Activated T-helper 2 cell treated with anti-CD3 and anti-CD28 coated beads, Interferon-gamma antibody, Interleukin-2, Interleukin-4, amounts not matched to agents 10 μg/mL and 5 μg/mL and 100 μg/mL, durations not matched to agents 14 hours and 24 hours and 36 hours (primary cell): ENCODE measurements at regions of chr9 and their contacts with region 1.

Region 1: DNA sequence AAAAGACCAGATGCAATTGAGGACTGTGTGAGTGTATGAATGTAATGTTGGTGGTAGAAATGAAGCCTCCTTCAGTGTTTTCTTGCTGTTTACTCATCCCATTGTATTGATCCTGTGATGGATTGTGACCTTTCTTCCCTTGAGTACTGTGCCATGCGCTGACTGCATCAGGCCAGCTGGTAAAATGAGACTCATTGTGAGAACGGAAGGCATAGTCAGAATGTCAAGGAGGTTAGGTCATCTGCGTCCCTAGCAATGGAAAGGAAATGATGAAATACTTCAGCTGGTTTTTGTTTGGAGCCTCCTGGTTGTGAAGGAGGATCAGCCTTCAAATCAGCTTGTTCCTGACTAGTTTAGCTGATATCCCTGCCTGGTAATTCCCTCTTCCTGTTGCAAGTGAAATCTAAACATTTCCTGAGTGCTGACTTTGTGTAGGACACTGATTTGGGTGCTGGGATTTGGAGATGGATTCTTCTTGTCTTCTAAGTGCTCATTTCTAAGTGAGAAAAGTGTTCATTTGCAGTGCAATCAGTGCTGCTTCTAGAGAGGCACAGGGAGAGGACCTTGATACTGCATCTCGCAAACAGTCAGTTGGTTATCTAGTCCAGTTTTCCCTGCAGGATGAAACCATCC is 35.5 kb downstream of the TNFSF8 start:
- DNase-seq: no peak
- H3K4me3 Mint-ChIP-seq: no peak overlapping the region
- H3K27ac Mint-ChIP-seq: peak overlapping the region; percentile 84
- H3K4me1 Mint-ChIP-seq: peaks cover 50% of the 10 kb centered on the region
- H3K27me3 Mint-ChIP-seq: no peaks in the 10 kb centered on the region

Region 2: GRCh38 chr9:114805670-114806525 is 89.0 kb before region 1 on chr9 and contains the start of gene TNFSF15:
- intact Hi-C with region 1: loop called (anchors 5 kb)
- DNase-seq: peak; percentile 22
- H3K4me3 Mint-ChIP-seq: peak within 1 kb of the TSS; percentile 10
- H3K27ac Mint-ChIP-seq: peak within 1 kb of the TSS; percentile 30
- H3K4me1 Mint-ChIP-seq: peaks cover 28% of the 10 kb centered on the region
- H3K27me3 Mint-ChIP-seq: peaks cover 31% of the 10 kb centered on the region
- total RNA-seq, gene TNFSF15: 0.25 and 0.28 TPM in 2 replicates

Region 3: DNA sequence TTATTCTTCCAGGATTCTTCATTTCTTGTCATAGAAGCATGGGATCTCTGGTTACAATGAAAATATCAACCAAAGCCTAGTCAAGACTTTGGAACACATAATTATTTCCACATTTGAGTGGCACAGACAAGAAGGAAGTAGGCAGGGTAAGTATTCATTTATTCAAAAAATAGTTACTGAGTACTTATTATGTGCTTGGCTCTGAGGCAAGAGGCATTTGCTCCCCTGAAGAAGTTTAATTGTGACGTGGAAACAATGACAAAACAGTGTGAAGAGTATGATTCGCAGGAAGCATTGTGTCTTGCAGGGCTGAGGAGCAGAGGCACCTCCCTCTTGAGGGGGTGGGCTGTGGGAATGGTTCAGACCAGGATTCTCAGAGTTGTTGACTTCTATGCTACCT is 44.0 kb before region 1 on chr9:
- intact Hi-C with region 1: loop called (anchors 2 kb)
- DNase-seq: no peak
- H3K4me3 Mint-ChIP-seq: no peak overlapping the region
- H3K27ac Mint-ChIP-seq: peak overlapping the region; percentile 9
- H3K4me1 Mint-ChIP-seq: peaks cover 19% of the 10 kb centered on the region
- H3K27me3 Mint-ChIP-seq: peaks cover 10% of the 10 kb centered on the region

Region 4: GRCh38 chr9:114861922-114862605 is 32.9 kb before region 1 on chr9:
- intact Hi-C with region 1: loop called (anchors 2 kb)
- DNase-seq: no peak
- H3K4me3 Mint-ChIP-seq: no peak overlapping the region
- H3K27ac Mint-ChIP-seq: no peak overlapping the region
- H3K4me1 Mint-ChIP-seq: peaks cover 16% of the 10 kb centered on the region
- H3K27me3 Mint-ChIP-seq: peaks cover 27% of the 10 kb centered on the region

Region 5: DNA sequence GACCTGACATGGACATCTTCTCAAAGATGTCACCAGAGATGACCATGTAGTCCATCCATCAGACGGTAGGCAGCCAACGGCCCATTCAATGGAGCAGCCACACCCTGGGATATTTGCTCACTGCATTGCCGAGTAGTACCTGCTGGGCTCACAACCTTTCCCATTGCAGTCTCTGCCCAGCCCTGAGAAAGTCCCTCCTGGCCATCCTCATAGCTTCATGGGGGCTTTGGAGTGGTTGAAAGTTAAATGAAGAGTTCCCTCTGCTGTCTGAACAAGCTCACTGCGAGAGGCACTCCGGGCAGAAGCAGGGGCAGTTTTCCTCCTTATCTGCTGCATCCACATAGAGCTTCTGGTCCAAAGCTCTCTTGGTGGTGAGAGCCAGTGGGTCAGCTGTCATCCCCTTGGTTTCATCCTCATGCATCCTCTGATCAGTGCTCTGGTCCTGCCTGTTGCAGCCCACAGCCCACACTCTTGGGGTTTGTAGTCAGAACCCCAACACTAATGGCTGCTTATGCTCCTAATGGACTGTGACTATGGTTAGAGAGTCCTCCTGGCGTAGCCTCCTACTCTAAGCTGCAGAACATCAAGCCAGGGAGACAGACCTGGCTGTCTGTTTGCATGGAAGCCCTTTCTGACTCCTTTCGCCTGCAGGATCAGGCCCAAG is 12.1 kb after region 1 on chr9:
- intact Hi-C with region 1: loop called (anchors 1 kb)
- DNase-seq: no peak
- H3K4me3 Mint-ChIP-seq: no peak overlapping the region
- H3K27ac Mint-ChIP-seq: peak overlapping the region; percentile 94
- H3K4me1 Mint-ChIP-seq: peaks cover 84% of the 10 kb centered on the region
- H3K27me3 Mint-ChIP-seq: no peaks in the 10 kb centered on the region

Region 6: DNA sequence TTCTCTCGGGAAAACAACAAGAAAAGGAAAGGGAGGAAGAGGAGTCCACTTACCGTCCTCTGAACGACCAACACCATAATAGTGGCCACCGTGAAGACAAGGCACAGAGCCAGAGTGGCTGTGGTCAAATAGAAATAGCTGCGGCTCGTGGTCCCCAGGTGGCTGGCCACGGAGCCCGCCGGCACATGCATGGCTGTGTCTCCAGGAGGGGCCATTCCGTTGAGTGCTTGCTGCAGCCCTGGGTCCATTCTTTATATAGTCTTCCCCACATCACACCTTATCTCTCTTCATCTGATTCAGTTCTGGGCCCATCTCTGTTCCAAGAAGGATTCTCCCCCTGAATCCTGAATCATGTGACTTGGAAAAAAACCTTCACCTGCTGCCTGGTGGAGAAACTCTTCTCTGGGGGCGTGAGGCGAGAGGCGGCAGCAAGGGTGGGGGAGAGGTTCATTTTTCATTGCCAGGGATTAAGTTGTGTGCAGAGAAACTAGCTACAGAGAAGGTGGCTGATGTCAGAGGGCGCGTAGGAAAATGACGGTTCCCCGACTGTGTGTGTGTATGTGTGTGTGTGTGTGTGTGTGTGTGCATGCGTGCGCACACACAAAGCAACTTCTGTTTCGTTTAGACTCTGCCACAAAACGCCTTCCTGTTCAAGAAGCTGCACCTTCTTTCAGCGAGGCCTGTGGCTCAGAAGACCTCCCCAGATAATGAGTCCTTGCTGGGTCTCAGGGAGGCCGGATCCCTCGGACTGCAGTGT is 35.3 kb after region 1 on chr9 and contains the start of gene TNFSF8:
- intact Hi-C with region 1: loop called (anchors 2 kb)
- DNase-seq: peak; percentile 79
- H3K4me3 Mint-ChIP-seq: peak within 1 kb of the TSS; percentile 98
- H3K27ac Mint-ChIP-seq: peak within 1 kb of the TSS; percentile 98
- H3K4me1 Mint-ChIP-seq: peaks cover 47% of the 10 kb centered on the region
- H3K27me3 Mint-ChIP-seq: no peaks in the 10 kb centered on the region
- total RNA-seq, gene TNFSF8: 73.6 and 82.3 TPM in 2 replicates

Region 7: DNA sequence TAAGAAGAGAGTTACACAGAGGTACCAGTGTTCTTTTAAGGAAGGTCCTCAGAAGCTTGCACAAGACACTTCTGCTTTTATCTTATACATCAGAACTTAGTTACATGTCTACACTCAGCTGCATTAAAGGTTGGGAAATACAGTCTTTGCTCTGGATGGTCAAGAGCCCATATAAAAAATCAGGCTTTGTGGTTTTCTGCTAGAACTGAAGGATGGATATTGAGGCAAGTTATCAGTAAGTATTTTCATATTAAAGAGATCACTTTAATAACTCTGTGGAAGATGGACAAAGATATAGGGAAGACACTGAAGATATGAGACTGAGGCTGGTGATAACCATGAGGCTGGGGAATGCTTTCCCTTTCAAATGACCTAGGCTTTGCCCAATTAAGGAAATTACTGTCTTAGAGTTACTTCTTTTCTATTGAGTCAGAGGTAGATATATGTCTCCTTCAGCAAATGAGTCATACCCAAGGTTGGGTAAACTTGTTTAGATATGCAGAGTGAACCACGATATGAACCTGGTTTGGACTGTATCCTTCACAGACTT is 310.1 kb after region 1 on chr9:
- intact Hi-C with region 1: loop called (anchors 5 kb)
- DNase-seq: no peak
- H3K4me3 Mint-ChIP-seq: no peak overlapping the region
- H3K27ac Mint-ChIP-seq: no peak overlapping the region
- H3K4me1 Mint-ChIP-seq: peaks cover 40% of the 10 kb centered on the region
- H3K27me3 Mint-ChIP-seq: peaks cover 17% of the 10 kb centered on the region